ENCODE measurements at regions of chr6 and their contacts with region 1.

Region 1: DNA sequence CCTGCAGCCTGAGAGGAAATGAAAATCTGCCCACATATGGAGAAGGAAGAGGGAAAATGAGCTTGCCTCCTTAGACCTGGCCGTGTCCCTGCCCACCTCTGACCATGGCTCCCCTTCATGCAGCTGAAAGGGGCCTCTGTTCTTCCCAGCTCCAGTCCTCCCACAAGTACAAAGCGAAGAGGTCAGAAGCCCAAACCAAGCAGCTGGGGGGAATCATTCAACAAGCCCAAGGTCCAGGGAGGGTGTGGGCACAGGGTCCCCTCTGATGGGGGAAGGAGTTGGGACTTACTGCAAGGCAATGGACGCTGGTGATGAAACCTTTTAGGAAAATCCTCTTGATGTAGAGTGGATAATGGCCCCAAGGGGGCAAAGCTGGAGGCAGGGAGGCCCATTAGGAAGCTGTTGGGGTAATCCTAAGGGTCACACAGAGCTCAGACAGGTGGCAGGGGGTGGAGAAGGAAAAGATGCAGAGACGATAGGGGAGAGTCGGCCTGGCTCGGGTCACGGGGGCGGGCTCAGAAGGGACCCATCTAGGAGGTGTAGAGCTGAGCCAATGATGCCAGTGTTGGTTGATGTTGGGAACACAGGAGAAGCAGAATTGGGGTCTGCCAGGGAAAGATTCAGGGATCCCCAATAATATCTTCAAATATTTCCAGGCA is 16.1 kb upstream of the GRM4 start:
- DNase-seq: peak; percentile 7
- ATAC-seq: no peak
- H3K4me3 Mint-ChIP-seq: no peak overlapping the region
- H3K27ac Mint-ChIP-seq: no peak overlapping the region
- H3K4me1 Mint-ChIP-seq: no peaks in the 10 kb centered on the region
- H3K27me3 Mint-ChIP-seq: peaks cover 15% of the 10 kb centered on the region; the same call in 1 of the 2 replicates
- CTCF ChIP-seq: no peak

Region 2: GRCh38 chr6:34273242-34273805 is 111.3 kb after region 1 on chr6:
- CTCF ChIA-PET with region 1: interaction called, 12 read pairs
- POLR2A ChIA-PET with region 1: no interaction called
- DNase-seq: no peak
- ATAC-seq: no peak
- H3K4me3 Mint-ChIP-seq: no peak overlapping the region
- H3K27ac Mint-ChIP-seq: no peak overlapping the region
- H3K4me1 Mint-ChIP-seq: peaks cover 5% of the 10 kb centered on the region
- H3K27me3 Mint-ChIP-seq: no peaks in the 10 kb centered on the region
- CTCF ChIP-seq: no peak

Region 3: GRCh38 chr6:34370361-34370760 is 208.4 kb after region 1 on chr6:
- CTCF ChIA-PET with region 1: no interaction called
- POLR2A ChIA-PET with region 1: no interaction called
- DNase-seq: no peak
- ATAC-seq: no peak
- H3K4me3 Mint-ChIP-seq: no peak overlapping the region
- H3K27ac Mint-ChIP-seq: no peak overlapping the region; the same call in 1 of the 2 replicates
- H3K4me1 Mint-ChIP-seq: no peaks in the 10 kb centered on the region
- H3K27me3 Mint-ChIP-seq: no peaks in the 10 kb centered on the region
- CTCF ChIP-seq: no peak